Activated CD4-positive, alpha-beta memory T cell treated with anti-CD3 and anti-CD28 coated beads for 36 hours (primary cell): ENCODE measurements at regions of chr14 and their contacts with region 1.

Region 1: GRCh38 chr14:97177015-97177414 is 379.8 kb downstream of the VRK1 start:
- DNase-seq: peak; percentile 36
- H3K4me3 Mint-ChIP-seq: no peak overlapping the region
- H3K27ac Mint-ChIP-seq: no peak overlapping the region
- H3K4me1 Mint-ChIP-seq: peaks cover 36% of the 10 kb centered on the region
- H3K27me3 Mint-ChIP-seq: no peaks in the 10 kb centered on the region

Region 2: GRCh38 chr14:97120611-97121031 is 56.4 kb before region 1 on chr14:
- CTCF ChIA-PET with region 1: no interaction called
- POLR2A ChIA-PET with region 1: interaction called, 3 read pairs
- intact Hi-C with region 1: loop called (anchors 2 kb)
- DNase-seq: peak; percentile 82
- H3K4me3 Mint-ChIP-seq: peak overlapping the region; percentile 20
- H3K27ac Mint-ChIP-seq: peak overlapping the region; percentile 97
- H3K4me1 Mint-ChIP-seq: peaks cover 31% of the 10 kb centered on the region
- H3K27me3 Mint-ChIP-seq: no peaks in the 10 kb centered on the region

Region 3: DNA sequence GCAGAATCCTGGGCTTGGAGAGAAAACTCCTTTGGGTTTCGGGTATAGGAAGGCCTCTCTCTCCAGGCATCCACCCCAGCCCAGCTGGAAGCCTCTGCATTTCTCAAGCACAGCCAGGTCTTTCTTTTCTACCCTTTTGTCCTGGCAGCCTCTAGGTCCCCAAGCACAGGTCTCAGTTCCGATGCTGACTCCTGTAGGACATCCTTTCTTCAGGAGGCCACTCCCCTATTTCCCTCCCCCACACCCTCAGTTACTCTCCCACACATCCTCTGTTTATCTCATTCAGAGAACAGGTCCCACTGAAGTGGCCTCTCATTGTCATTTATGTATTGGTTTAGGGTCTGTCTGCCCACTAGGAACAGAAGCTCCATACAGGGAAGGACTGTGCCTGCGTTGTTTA is 27.2 kb before region 1 on chr14:
- CTCF ChIA-PET with region 1: no interaction called
- POLR2A ChIA-PET with region 1: no interaction called
- intact Hi-C with region 1: no loop called
- DNase-seq: no peak
- H3K4me3 Mint-ChIP-seq: no peak overlapping the region
- H3K27ac Mint-ChIP-seq: no peak overlapping the region
- H3K4me1 Mint-ChIP-seq: no peaks in the 10 kb centered on the region
- H3K27me3 Mint-ChIP-seq: peaks cover 3% of the 10 kb centered on the region

Region 4: GRCh38 chr14:97299661-97300060 is 122.6 kb after region 1 on chr14:
- CTCF ChIA-PET with region 1: interaction called, 3 read pairs
- POLR2A ChIA-PET with region 1: no interaction called
- intact Hi-C with region 1: loop called (anchors 10 kb)
- DNase-seq: peak; percentile 50
- H3K4me3 Mint-ChIP-seq: no peak overlapping the region
- H3K27ac Mint-ChIP-seq: no peak overlapping the region
- H3K4me1 Mint-ChIP-seq: peaks cover 6% of the 10 kb centered on the region
- H3K27me3 Mint-ChIP-seq: peaks cover 4% of the 10 kb centered on the region

Region 5: GRCh38 chr14:97592341-97592980 is 415.4 kb after region 1 on chr14:
- CTCF ChIA-PET with region 1: no interaction called
- POLR2A ChIA-PET with region 1: no interaction called
- intact Hi-C with region 1: no loop called
- DNase-seq: no peak
- H3K4me3 Mint-ChIP-seq: no peak overlapping the region
- H3K27ac Mint-ChIP-seq: no peak overlapping the region
- H3K4me1 Mint-ChIP-seq: peaks cover 31% of the 10 kb centered on the region
- H3K27me3 Mint-ChIP-seq: no peaks in the 10 kb centered on the region

Region 6: DNA sequence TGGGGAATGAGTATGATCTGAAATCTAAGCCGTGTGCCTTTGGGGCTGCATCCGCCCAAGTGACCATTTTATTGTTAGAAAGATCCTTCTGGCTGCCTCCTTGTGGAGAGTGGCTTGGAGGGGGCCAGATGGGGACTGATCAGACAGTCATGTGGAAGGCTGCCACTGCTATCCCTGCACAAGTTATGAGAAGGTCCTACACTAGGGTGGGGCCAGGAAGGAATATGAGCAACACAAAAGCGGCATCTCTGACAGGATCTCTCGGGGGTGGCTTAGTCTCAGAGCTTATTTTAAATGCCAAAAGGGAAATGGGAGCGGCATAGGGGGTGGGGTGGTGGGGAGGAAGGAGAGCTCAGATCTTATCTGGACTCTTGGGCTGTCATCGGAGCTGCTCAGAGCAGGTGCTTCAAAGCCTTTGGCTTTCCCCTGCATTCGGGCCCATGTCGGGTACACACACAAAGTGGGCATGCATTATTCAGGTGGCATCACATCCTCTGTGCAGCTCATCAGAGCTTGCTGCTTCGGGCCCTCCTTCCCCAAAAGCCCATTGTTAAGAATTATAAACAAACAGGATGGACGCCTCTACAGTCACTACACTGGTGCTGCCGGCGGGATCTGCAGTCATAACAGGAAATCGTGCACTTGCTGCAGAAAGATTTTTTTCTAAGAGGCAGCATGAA is 425.6 kb after region 1 on chr14:
- CTCF ChIA-PET with region 1: no interaction called
- POLR2A ChIA-PET with region 1: no interaction called
- intact Hi-C with region 1: loop called (anchors 10 kb)
- DNase-seq: peak; percentile 80
- H3K4me3 Mint-ChIP-seq: no peak overlapping the region
- H3K27ac Mint-ChIP-seq: no peak overlapping the region
- H3K4me1 Mint-ChIP-seq: peaks cover 29% of the 10 kb centered on the region
- H3K27me3 Mint-ChIP-seq: no peaks in the 10 kb centered on the region